ENCODE measurements at regions of chr14 and their contacts with region 1.

Region 1: GRCh38 chr14:100056964-100057795 is 8.0 kb upstream of the EVL start:
- DNase-seq: no peak
- ATAC-seq: peak; percentile 82
- H3K4me3 Mint-ChIP-seq: no peak overlapping the region
- H3K27ac Mint-ChIP-seq: peak overlapping the region; percentile 43
- H3K4me1 Mint-ChIP-seq: peaks cover 32% of the 10 kb centered on the region
- H3K27me3 Mint-ChIP-seq: no peaks in the 10 kb centered on the region
- CTCF ChIP-seq: no peak

Region 2: DNA sequence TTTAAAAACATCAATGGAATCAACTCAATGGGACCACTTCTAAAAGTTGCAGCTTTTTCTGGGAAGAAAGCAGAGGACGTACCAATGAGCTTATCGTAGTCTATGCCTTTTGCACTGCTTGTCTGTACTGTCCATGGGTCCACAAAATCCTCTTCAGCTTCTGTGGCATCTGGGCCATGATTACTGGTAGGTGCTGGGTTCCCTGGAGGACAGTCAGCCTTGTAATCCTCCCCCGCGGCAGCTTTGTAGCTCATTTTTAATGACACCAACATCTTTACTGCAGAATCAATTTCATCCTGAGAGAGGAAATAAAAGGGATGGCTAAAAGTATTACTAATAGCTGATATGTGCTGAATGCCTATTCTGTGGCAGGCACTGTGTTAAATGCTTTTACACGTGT is 304.4 kb after region 1 on chr14:
- CTCF ChIA-PET with region 1: no interaction called
- POLR2A ChIA-PET with region 1: interaction called, 13 read pairs
- intact Hi-C with region 1: no loop called
- DNase-seq: no peak
- ATAC-seq: no peak
- H3K4me3 Mint-ChIP-seq: no peak overlapping the region
- H3K27ac Mint-ChIP-seq: no peak overlapping the region
- H3K4me1 Mint-ChIP-seq: no peaks in the 10 kb centered on the region
- H3K27me3 Mint-ChIP-seq: no peaks in the 10 kb centered on the region
- CTCF ChIP-seq: no peak

Measured in activated B cell treated with CpG ODN at 0.5 μM for 24 hours (primary cell).